CD4-positive, alpha-beta memory T cell (primary cell): ENCODE measurements at regions of chr5 and their contacts with region 1.

Region 1: GRCh38 chr5:157540707-157541446 is 34.7 kb downstream of the ADAM19 start:
- DNase-seq: peak; percentile 53 to 75 (median 62)
- H3K4me3 ChIP-seq: peak overlapping the region; percentile 12 to 40
- H3K4me3 Mint-ChIP-seq: peak overlapping the region; percentile 71 to 90 (median 80)
- H3K27ac ChIP-seq: peak overlapping the region; percentile 77
- H3K27ac Mint-ChIP-seq: peak overlapping the region; percentile 89 to 95 (median 93)
- H3K4me1 ChIP-seq: peaks cover 95% of the 10 kb centered on the region
- H3K4me1 Mint-ChIP-seq: peaks cover 73 to 94% (median 84%) of the 10 kb centered on the region in 4 donors
- H3K27me3 ChIP-seq: no peaks in the 10 kb centered on the region
- H3K27me3 Mint-ChIP-seq: no peaks in the 10 kb centered on the region

Region 2: DNA sequence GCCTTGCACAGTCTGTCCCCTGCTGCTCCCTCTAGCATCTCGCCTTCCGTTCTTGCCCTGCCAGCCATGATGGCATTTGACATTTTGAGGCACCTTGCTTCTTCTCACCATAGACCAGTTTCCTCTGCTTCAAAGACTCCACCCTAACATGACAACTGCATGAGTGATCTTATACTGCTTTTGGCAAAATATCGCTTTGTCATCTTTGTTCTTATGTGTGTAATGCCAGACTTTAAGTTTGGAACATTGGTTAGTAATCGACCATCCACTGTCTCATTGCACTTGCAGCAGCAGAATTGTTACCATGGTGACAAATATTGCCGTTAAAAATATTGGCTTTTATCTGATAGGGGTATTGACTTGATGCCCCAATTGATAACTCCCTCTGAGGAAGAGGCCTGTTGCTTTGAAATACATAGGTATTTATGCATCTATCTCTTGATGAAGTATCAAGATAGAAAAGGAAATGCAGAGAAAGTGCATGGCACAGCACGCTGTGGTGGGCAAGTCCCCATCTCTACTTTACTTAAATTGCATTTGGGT is 381.6 kb before region 1 on chr5:
- CTCF ChIA-PET with region 1: no interaction called
- POLR2A ChIA-PET with region 1: no interaction called
- intact Hi-C with region 1: loop called (anchors 10 kb)
- DNase-seq: peak; percentile 74 to 87 (median 81)
- H3K4me3 ChIP-seq: peak overlapping the region in 1 of 2 donors; percentile 31
- H3K4me3 Mint-ChIP-seq: peak overlapping the region in 7 of 8 donors; percentile 51 to 75 (median 65)
- H3K27ac ChIP-seq: peak overlapping the region; percentile 88
- H3K27ac Mint-ChIP-seq: peak overlapping the region; percentile 91 to 99 (median 98)
- H3K4me1 ChIP-seq: peaks cover 74% of the 10 kb centered on the region
- H3K4me1 Mint-ChIP-seq: peaks cover 57 to 91% (median 73%) of the 10 kb centered on the region in 4 donors
- H3K27me3 ChIP-seq: no peaks in the 10 kb centered on the region
- H3K27me3 Mint-ChIP-seq: no peaks in the 10 kb centered on the region

Region 3: GRCh38 chr5:157528036-157528632 is 12.7 kb before region 1 on chr5:
- CTCF ChIA-PET with region 1: interaction called, 4 read pairs
- POLR2A ChIA-PET with region 1: interaction called, 25 read pairs
- intact Hi-C with region 1: no loop called
- DNase-seq: no peak
- H3K4me3 ChIP-seq: no peak overlapping the region
- H3K4me3 Mint-ChIP-seq: no peak overlapping the region
- H3K27ac ChIP-seq: no peak overlapping the region
- H3K27ac Mint-ChIP-seq: peak overlapping the region in 4 of 7 donors; percentile 22 to 64 (median 52)
- H3K4me1 ChIP-seq: peaks cover 48% of the 10 kb centered on the region
- H3K4me1 Mint-ChIP-seq: peaks cover 35 to 88% (median 62%) of the 10 kb centered on the region in 4 donors
- H3K27me3 ChIP-seq: no peaks in the 10 kb centered on the region
- H3K27me3 Mint-ChIP-seq: no peaks in the 10 kb centered on the region

Region 4: DNA sequence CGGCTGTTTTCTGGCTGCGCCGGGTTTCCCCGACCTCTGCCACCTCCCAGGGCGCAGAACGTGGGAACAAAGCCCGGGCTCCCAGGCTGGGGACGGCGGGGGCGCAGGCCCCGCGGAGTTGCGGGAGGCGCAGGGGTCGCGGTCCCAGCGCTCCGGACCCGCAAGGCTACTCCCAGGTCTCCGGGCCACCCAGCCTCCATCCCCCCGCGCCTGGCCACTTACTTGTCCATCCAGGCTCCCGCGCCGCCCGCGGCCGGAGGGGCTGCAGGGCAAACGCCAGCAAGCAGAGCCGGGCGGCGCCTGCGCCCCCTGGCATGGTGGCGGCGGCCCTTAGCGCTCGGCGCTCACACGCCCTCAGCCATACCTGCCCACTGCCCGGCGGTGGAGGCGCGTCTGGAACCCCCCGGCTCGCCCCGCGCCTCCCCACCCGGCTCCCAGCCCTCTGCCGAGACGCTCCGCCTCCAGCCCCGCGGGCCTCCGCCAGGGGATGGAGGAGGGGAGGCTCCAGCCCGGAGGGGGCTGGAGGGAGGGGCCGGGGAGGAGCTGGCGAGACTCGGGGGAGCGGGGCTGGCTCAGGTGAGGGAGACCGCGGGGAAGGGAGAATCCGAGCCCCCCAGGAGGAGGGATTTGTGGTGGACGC is 34.6 kb after region 1 on chr5 and contains the start of gene ADAM19:
- CTCF ChIA-PET with region 1: interaction called, 11 read pairs
- POLR2A ChIA-PET with region 1: interaction called, 220 read pairs
- intact Hi-C with region 1: loop called (anchors 1 kb)
- DNase-seq: peak; percentile 46 to 58 (median 52)
- H3K4me3 ChIP-seq: peak within 1 kb of the TSS; percentile 82 to 95
- H3K4me3 Mint-ChIP-seq: peak within 1 kb of the TSS; percentile 94 to 100 (median 98)
- H3K27ac ChIP-seq: peak within 1 kb of the TSS; percentile 73
- H3K27ac Mint-ChIP-seq: peak within 1 kb of the TSS; percentile 89 to 98 (median 95)
- H3K4me1 ChIP-seq: peaks cover 51% of the 10 kb centered on the region
- H3K4me1 Mint-ChIP-seq: peaks cover 30 to 83% (median 47%) of the 10 kb centered on the region in 4 donors
- H3K27me3 ChIP-seq: no peaks in the 10 kb centered on the region
- H3K27me3 Mint-ChIP-seq: no peaks in the 10 kb centered on the region
- total RNA-seq, gene ADAM19: 31.5 to 33.9 TPM

Region 5: GRCh38 chr5:157611571-157612476 is 70.9 kb after region 1 on chr5:
- CTCF ChIA-PET with region 1: interaction called, 4 read pairs
- POLR2A ChIA-PET with region 1: interaction called, 12 read pairs
- intact Hi-C with region 1: no loop called
- DNase-seq: no peak
- H3K4me3 ChIP-seq: no peak overlapping the region
- H3K4me3 Mint-ChIP-seq: peak overlapping the region in 2 of 8 donors; percentile 25 to 31
- H3K27ac ChIP-seq: no peak overlapping the region
- H3K27ac Mint-ChIP-seq: peak overlapping the region in 2 of 7 donors; percentile 64 to 81
- H3K4me1 ChIP-seq: peaks cover 68% of the 10 kb centered on the region
- H3K4me1 Mint-ChIP-seq: peaks cover 44 to 72% (median 60%) of the 10 kb centered on the region in 4 donors
- H3K27me3 ChIP-seq: no peaks in the 10 kb centered on the region
- H3K27me3 Mint-ChIP-seq: no peaks in the 10 kb centered on the region

Region 6: GRCh38 chr5:157665467-157666100 is 124.7 kb after region 1 on chr5:
- CTCF ChIA-PET with region 1: interaction called, 3 read pairs
- POLR2A ChIA-PET with region 1: no interaction called
- intact Hi-C with region 1: loop called (anchors 5 kb)
- DNase-seq: no peak
- H3K4me3 ChIP-seq: no peak overlapping the region
- H3K4me3 Mint-ChIP-seq: no peak overlapping the region
- H3K27ac ChIP-seq: no peak overlapping the region
- H3K27ac Mint-ChIP-seq: no peak overlapping the region
- H3K4me1 ChIP-seq: peaks cover 6% of the 10 kb centered on the region
- H3K4me1 Mint-ChIP-seq: peaks cover 9 to 10% (median 9%) of the 10 kb centered on the region in 4 donors
- H3K27me3 ChIP-seq: no peaks in the 10 kb centered on the region
- H3K27me3 Mint-ChIP-seq: no peaks in the 10 kb centered on the region